ENCODE measurements at regions of chr6 and their contacts with region 1.

Region 1: GRCh38 chr6:157068691-157069324 is 254.5 kb downstream of the TMEM242 start:
- DNase-seq: no peak
- ATAC-seq: peak; percentile 39
- H3K4me3 Mint-ChIP-seq: no peak overlapping the region
- H3K27ac Mint-ChIP-seq: peak overlapping the region; percentile 6
- H3K4me1 Mint-ChIP-seq: peaks cover 30% of the 10 kb centered on the region
- H3K27me3 Mint-ChIP-seq: no peaks in the 10 kb centered on the region

Region 2: GRCh38 chr6:157054531-157054979 is 14.3 kb before region 1 on chr6:
- CTCF ChIA-PET with region 1: interaction called, 12 read pairs
- POLR2A ChIA-PET with region 1: interaction called, 7 read pairs
- DNase-seq: peak; percentile 67
- ATAC-seq: peak; percentile 95
- H3K4me3 Mint-ChIP-seq: peak overlapping the region; percentile 48
- H3K27ac Mint-ChIP-seq: peak overlapping the region; percentile 96
- H3K4me1 Mint-ChIP-seq: peaks cover 34% of the 10 kb centered on the region
- H3K27me3 Mint-ChIP-seq: no peaks in the 10 kb centered on the region